Activated CD4-positive, alpha-beta memory T cell treated with anti-CD3 and anti-CD28 coated beads for 36 hours (primary cell): ENCODE measurements at regions of chr1 and their contacts with region 1.

Region 1: GRCh38 chr1:89274411-89274857 is 1.8 kb upstream of the GBP5 start:
- DNase-seq: no peak
- H3K4me3 Mint-ChIP-seq: peak overlapping the region; percentile 80
- H3K27ac Mint-ChIP-seq: peak overlapping the region; percentile 99
- H3K4me1 Mint-ChIP-seq: peaks cover 76% of the 10 kb centered on the region
- H3K27me3 Mint-ChIP-seq: no peaks in the 10 kb centered on the region

Region 2: DNA sequence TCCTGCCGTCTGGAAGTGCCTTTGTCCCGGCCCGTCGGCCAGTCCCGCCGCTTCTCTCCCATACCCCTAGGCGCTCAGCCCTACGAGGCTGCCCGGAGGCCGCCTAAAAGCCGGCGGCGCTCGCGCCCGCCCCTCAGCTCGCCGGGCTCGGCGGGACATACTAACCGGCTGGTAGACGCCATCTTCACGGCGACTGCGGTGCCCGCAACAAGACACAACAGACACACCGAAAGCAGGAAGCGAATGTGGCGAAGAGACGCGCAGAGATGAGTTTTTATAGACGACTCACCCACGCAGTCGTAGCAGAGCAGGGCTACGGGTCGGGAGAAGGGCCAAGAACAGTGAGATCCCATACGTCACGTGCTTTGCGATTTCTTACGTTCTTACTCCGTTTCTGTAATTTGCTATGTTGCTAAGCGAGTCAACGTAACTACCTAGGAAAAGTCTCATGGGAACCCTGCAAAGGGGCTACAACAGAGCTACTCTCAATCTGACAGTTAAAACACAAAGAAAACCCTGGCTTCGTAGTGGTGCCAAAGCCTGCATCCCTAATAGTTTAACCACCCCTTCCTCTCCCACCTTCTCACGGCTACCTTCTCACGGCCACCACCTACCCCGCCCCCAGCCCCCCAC is 383.0 kb before region 1 on chr1 and contains the start of gene GTF2B:
- CTCF ChIA-PET with region 1: no interaction called
- POLR2A ChIA-PET with region 1: no interaction called
- intact Hi-C with region 1: loop called (anchors 5 kb)
- DNase-seq: peak; percentile 97
- H3K4me3 Mint-ChIP-seq: peak within 1 kb of the TSS; percentile 81
- H3K27ac Mint-ChIP-seq: peak within 1 kb of the TSS; percentile 84
- H3K4me1 Mint-ChIP-seq: peaks cover 41% of the 10 kb centered on the region
- H3K27me3 Mint-ChIP-seq: peaks cover 2% of the 10 kb centered on the region
- total RNA-seq, gene GTF2B: 34.2 to 39.4 TPM

Region 3: GRCh38 chr1:88990426-88990825 is 284.0 kb before region 1 on chr1:
- CTCF ChIA-PET with region 1: no interaction called
- POLR2A ChIA-PET with region 1: interaction called, 3 read pairs
- intact Hi-C with region 1: loop called (anchors 1 kb)
- DNase-seq: no peak
- H3K4me3 Mint-ChIP-seq: peak overlapping the region; percentile 35
- H3K27ac Mint-ChIP-seq: peak overlapping the region; percentile 70
- H3K4me1 Mint-ChIP-seq: peaks cover 47% of the 10 kb centered on the region
- H3K27me3 Mint-ChIP-seq: no peaks in the 10 kb centered on the region

Region 4: GRCh38 chr1:89041119-89041641 is 233.3 kb before region 1 on chr1:
- CTCF ChIA-PET with region 1: interaction called, 4 read pairs
- POLR2A ChIA-PET with region 1: interaction called, 3 read pairs
- intact Hi-C with region 1: loop called (anchors 1 kb)
- DNase-seq: peak; percentile 66
- H3K4me3 Mint-ChIP-seq: no peak overlapping the region
- H3K27ac Mint-ChIP-seq: peak overlapping the region; percentile 70
- H3K4me1 Mint-ChIP-seq: peaks cover 41% of the 10 kb centered on the region
- H3K27me3 Mint-ChIP-seq: peaks cover 13% of the 10 kb centered on the region

Region 5: DNA sequence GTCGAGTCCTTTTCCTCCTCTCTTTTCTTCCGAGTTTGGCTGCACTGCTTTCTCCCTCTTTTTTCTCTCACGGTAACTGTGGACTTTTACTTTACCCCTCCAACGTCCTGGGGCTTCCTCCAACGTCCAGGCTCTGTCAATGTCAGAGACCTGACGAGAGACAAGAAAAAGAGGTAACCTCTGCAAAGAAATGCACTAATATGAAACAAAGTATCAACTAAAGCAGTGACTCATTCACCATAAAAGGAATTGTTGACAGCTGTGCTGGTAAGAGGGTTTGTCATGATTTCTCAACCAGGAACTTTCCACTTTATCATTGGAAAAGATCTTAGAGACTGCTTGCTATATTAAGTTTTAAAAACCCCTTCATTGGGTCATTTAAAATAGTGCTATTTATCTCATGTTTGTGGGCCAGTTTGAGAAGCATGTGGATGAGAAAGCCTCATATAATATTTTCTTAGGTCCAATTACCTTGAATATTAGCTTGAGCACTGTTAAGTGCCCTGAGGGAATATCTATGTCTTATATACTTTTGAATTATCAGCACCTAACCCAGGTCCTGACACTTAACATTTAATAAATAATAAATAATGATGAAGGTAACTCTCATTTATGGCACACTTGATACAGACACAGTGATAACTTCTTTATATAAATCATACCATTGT is 148.4 kb before region 1 on chr1 and contains the start of gene GBP2:
- CTCF ChIA-PET with region 1: interaction called, 6 read pairs
- POLR2A ChIA-PET with region 1: interaction called, 72 read pairs
- intact Hi-C with region 1: loop called (anchors 1 kb)
- DNase-seq: peak; percentile 51
- H3K4me3 Mint-ChIP-seq: peak within 1 kb of the TSS; percentile 95
- H3K27ac Mint-ChIP-seq: peak within 1 kb of the TSS; percentile 99
- H3K4me1 Mint-ChIP-seq: peaks cover 54% of the 10 kb centered on the region
- H3K27me3 Mint-ChIP-seq: no peaks in the 10 kb centered on the region
- total RNA-seq, gene GBP2: 396 to 403 TPM

Region 6: GRCh38 chr1:89286549-89287180 is 12.2 kb after region 1 on chr1:
- CTCF ChIA-PET with region 1: interaction called, 33 read pairs
- POLR2A ChIA-PET with region 1: interaction called, 21 read pairs
- intact Hi-C with region 1: loop called (anchors 2 kb)
- DNase-seq: no peak
- H3K4me3 Mint-ChIP-seq: peak overlapping the region; percentile 38
- H3K27ac Mint-ChIP-seq: peak overlapping the region; percentile 78
- H3K4me1 Mint-ChIP-seq: peaks cover 65% of the 10 kb centered on the region
- H3K27me3 Mint-ChIP-seq: no peaks in the 10 kb centered on the region

Region 7: GRCh38 chr1:89310505-89310904 is 36.1 kb after region 1 on chr1:
- CTCF ChIA-PET with region 1: interaction called, 3 read pairs
- POLR2A ChIA-PET with region 1: interaction called, 3 read pairs
- intact Hi-C with region 1: loop called (anchors 1 kb)
- DNase-seq: no peak
- H3K4me3 Mint-ChIP-seq: peak overlapping the region; percentile 14
- H3K27ac Mint-ChIP-seq: peak overlapping the region; percentile 85
- H3K4me1 Mint-ChIP-seq: peaks cover 45% of the 10 kb centered on the region
- H3K27me3 Mint-ChIP-seq: no peaks in the 10 kb centered on the region